Endothelial cell of umbilical vein (primary cell): ENCODE measurements at regions of chr16 and their contacts with region 1.

Region 1: DNA sequence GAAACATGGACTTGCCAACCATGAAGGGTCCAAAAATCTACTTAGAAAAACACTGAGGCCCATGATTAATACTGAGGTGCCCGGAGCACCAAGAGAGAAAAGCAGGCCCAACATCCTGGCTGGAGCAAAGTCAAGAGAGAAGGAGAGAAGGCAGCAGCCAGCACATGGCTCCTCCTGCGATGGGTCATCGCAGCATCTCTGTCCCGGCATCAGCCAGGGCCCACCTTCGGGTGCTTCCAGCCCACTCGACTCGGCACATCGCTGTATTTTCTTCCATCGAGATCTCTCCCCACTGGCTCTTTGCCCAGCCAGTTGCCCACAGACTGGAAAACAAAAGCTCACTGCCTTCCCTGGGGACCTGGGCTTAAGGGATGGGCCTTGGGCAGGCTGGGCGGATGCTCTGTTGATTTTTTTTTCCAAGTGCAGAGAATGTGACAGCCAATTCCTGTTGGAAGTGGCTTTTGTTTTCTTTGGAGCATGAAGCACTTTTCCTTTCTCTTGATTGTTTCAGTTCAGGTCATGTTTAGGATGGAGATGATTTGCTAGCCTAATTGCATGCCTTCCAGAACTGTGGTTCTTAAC is 58.1 kb downstream of the CYB5B start:
- DNase-seq: peak; percentile 97
- H3K4me3 ChIP-seq: no peak overlapping the region
- H3K27ac ChIP-seq: peak overlapping the region; percentile 78
- H3K4me1 ChIP-seq: peaks cover 25% of the 10 kb centered on the region
- H3K27me3 ChIP-seq: no peaks in the 10 kb centered on the region
- CTCF ChIP-seq: no peak
- POLR2A ChIP-seq: no peak

Region 2: GRCh38 chr16:69410285-69410990 is 72.1 kb before region 1 on chr16:
- CTCF ChIA-PET with region 1: interaction called, 4 read pairs
- POLR2A ChIA-PET with region 1: no interaction called
- dilution Hi-C with region 1: no loop called
- intact Hi-C with region 1: loop called (anchors 1 kb)
- DNase-seq: peak; percentile 95
- H3K4me3 ChIP-seq: peak overlapping the region in 1 of 3 experiments; percentile 23
- H3K27ac ChIP-seq: peak overlapping the region; percentile 81
- H3K4me1 ChIP-seq: peaks cover 17% of the 10 kb centered on the region
- H3K27me3 ChIP-seq: no peaks in the 10 kb centered on the region
- CTCF ChIP-seq: no peak
- POLR2A ChIP-seq: peak; percentile 70

Region 3: DNA sequence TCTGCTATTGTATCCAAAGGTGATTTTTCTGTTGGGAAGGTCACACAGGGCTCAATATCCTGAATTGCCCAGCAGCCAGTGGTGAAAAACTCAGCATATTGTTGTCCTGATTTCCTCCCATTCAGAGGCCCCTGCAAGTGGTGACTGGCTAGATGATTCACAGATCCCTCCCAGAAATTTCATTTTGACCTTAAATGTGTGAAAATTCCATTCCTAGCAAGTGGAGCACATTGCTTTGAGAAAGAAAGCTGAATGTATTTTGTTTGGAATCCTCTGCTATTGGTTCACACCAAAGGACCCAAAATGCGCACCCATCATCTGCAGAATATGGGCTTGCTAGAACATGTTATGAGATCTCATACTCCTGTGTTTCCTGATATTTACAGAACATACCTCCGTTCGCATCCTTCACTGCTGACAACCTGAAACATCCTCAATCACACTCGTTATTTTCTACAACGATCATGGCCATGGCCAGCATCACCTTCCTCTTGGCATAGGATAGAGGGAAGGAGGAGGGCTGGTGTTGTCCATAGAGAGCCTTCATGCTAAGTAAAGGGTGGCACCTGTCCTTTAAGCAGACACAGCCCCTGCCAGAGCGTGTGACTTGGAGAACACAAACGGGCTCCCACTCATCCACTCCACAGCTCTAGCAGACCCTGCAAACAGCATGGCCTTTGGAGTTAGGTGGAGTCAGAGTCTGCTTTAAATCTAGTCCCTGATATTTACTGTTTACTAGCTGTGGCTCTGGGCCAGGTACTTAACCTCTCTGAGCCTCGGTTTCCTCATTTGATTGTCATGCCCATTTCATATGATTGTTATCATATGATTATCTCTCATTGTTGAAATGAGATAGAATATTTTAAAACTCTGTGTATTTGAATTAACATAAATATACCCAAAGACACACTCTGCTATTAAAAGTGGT is 52.9 kb after region 1 on chr16:
- CTCF ChIA-PET with region 1: interaction called, 6 read pairs
- POLR2A ChIA-PET with region 1: no interaction called
- dilution Hi-C with region 1: no loop called
- intact Hi-C with region 1: loop called (anchors 1 kb)
- DNase-seq: peak; percentile 94
- H3K4me3 ChIP-seq: no peak overlapping the region
- H3K27ac ChIP-seq: peak overlapping the region; percentile 14
- H3K4me1 ChIP-seq: peaks cover 19% of the 10 kb centered on the region
- H3K27me3 ChIP-seq: no peaks in the 10 kb centered on the region
- CTCF ChIP-seq: no peak
- POLR2A ChIP-seq: no peak

Region 4: GRCh38 chr16:69781118-69781517 is 298.6 kb after region 1 on chr16:
- CTCF ChIA-PET with region 1: no interaction called
- POLR2A ChIA-PET with region 1: no interaction called
- dilution Hi-C with region 1: no loop called
- intact Hi-C with region 1: no loop called
- DNase-seq: no peak
- H3K4me3 ChIP-seq: no peak overlapping the region
- H3K27ac ChIP-seq: no peak overlapping the region
- H3K4me1 ChIP-seq: no peaks in the 10 kb centered on the region
- H3K27me3 ChIP-seq: no peaks in the 10 kb centered on the region
- CTCF ChIP-seq: no peak
- POLR2A ChIP-seq: no peak